MCF 10A (cell line): ENCODE measurements at regions of chr10 and their contacts with region 1.

Region 1: GRCh38 chr10:96374985-96375830 is 16.4 kb upstream of the OPALIN start:
- DNase-seq: peak; percentile 94
- H3K4me3 Mint-ChIP-seq: peak overlapping the region; percentile 66
- H3K27ac Mint-ChIP-seq: no peak overlapping the region
- H3K4me1 Mint-ChIP-seq: peaks cover 15% of the 10 kb centered on the region
- H3K27me3 Mint-ChIP-seq: no peaks in the 10 kb centered on the region
- CTCF ChIP-seq: peak; percentile 95

Region 2: DNA sequence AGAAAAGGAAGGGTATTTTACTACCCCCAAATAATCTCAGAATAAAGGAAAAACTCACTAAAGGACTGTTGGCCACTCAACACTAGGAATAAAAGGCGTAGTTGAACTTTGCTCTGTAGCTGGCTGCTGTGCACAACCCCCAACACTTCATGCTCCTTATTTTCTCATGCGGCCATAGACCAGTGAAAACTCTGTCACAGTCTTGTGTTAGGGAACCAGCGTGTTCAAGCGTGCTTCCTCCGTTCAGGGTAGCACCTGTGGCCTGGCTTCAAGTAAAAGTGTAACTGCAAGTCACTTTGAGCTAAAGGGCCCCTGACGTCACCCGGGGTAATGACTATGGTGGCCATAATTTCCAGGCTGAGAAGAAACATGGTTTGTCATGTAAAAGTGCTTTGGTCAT is 130.9 kb before region 1 on chr10:
- CTCF ChIA-PET with region 1: no interaction called
- POLR2A ChIA-PET with region 1: no interaction called
- intact Hi-C with region 1: no loop called
- DNase-seq: no peak
- H3K4me3 Mint-ChIP-seq: no peak overlapping the region
- H3K27ac Mint-ChIP-seq: no peak overlapping the region
- H3K4me1 Mint-ChIP-seq: no peaks in the 10 kb centered on the region
- H3K27me3 Mint-ChIP-seq: no peaks in the 10 kb centered on the region
- CTCF ChIP-seq: no peak

Region 3: GRCh38 chr10:96334616-96335526 is 40.3 kb before region 1 on chr10:
- CTCF ChIA-PET with region 1: interaction called, 33 read pairs
- POLR2A ChIA-PET with region 1: no interaction called
- intact Hi-C with region 1: loop called (anchors 2 kb)
- DNase-seq: peak; percentile 53
- H3K4me3 Mint-ChIP-seq: no peak overlapping the region
- H3K27ac Mint-ChIP-seq: no peak overlapping the region
- H3K4me1 Mint-ChIP-seq: no peaks in the 10 kb centered on the region
- H3K27me3 Mint-ChIP-seq: peaks cover 59% of the 10 kb centered on the region
- CTCF ChIP-seq: peak; percentile 53

Region 4: GRCh38 chr10:96387161-96387560 is 12.0 kb after region 1 on chr10:
- CTCF ChIA-PET with region 1: interaction called, 72 read pairs
- POLR2A ChIA-PET with region 1: no interaction called
- intact Hi-C with region 1: no loop called
- DNase-seq: no peak
- H3K4me3 Mint-ChIP-seq: no peak overlapping the region
- H3K27ac Mint-ChIP-seq: no peak overlapping the region
- H3K4me1 Mint-ChIP-seq: no peaks in the 10 kb centered on the region
- H3K27me3 Mint-ChIP-seq: peaks cover 37% of the 10 kb centered on the region
- CTCF ChIP-seq: no peak

Region 5: DNA sequence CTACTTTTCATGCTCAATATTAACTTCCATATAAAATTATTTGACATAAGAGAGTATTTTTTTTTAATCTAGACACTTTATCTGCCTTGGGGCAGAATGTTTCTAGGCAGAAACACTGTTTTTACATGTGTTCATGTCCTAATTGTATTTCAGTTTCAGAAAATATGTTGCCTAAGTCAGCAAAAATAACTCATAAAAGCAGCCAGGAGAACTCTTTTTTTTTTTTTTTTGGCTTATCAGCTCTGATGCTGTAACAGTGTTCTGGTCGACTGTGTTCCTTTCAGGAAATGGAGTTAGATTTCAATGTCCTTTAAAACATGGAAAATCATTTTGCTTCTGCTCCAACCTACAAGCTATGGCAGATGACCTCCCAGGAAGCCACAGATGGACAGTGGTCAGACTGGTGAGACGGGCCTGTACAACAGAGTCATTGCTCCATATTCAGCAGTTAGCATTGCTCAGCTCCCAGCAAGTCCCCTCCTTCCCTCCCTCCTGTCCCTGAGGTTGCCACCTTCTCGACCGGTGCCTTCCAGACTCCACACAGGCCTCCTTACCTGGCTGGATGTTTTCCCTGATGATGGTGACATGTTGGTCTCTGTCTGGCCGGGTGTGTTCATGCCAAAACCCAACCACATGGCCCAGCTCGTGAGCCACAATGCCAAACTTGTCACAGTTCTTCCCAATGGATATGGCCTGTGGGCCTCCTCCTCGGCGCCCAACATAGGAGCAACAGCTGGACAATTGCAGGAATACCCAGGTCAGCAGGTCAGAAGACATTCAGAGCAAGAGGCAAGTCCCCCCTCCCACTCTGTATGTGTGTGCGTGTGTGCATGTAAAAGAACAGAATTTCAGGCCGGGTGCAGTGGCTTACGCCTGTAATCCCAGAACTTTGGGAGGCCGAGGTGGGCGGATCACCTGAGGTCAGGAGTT is 47.1 kb after region 1 on chr10:
- CTCF ChIA-PET with region 1: interaction called, 10 read pairs
- POLR2A ChIA-PET with region 1: no interaction called
- intact Hi-C with region 1: no loop called
- DNase-seq: no peak
- H3K4me3 Mint-ChIP-seq: no peak overlapping the region
- H3K27ac Mint-ChIP-seq: no peak overlapping the region
- H3K4me1 Mint-ChIP-seq: no peaks in the 10 kb centered on the region
- H3K27me3 Mint-ChIP-seq: peaks cover 29% of the 10 kb centered on the region
- CTCF ChIP-seq: no peak

Region 6: GRCh38 chr10:97025613-97026242 is 650.5 kb after region 1 on chr10:
- CTCF ChIA-PET with region 1: interaction called, 3 read pairs
- POLR2A ChIA-PET with region 1: no interaction called
- intact Hi-C with region 1: loop called (anchors 1 kb)
- DNase-seq: peak; percentile 76
- H3K4me3 Mint-ChIP-seq: no peak overlapping the region
- H3K27ac Mint-ChIP-seq: no peak overlapping the region
- H3K4me1 Mint-ChIP-seq: peaks cover 10% of the 10 kb centered on the region
- H3K27me3 Mint-ChIP-seq: peaks cover 15% of the 10 kb centered on the region
- CTCF ChIP-seq: peak; percentile 64